Caco-2 (cell line): ENCODE measurements at regions of chr4 and their contacts with region 1.

Region 1: GRCh38 chr4:176642472-176642871 is 150.2 kb downstream of the VEGFC start:
- DNase-seq: no peak
- H3K4me3 ChIP-seq: no peak overlapping the region
- H3K4me3 Mint-ChIP-seq: no peak overlapping the region
- H3K27ac Mint-ChIP-seq: no peak overlapping the region
- H3K4me1 ChIP-seq: no peaks in the 10 kb centered on the region
- H3K4me1 Mint-ChIP-seq: no peaks in the 10 kb centered on the region
- H3K27me3 ChIP-seq: no peaks in the 10 kb centered on the region
- H3K27me3 Mint-ChIP-seq: no peaks in the 10 kb centered on the region
- CTCF ChIP-seq: no peak

Region 2: DNA sequence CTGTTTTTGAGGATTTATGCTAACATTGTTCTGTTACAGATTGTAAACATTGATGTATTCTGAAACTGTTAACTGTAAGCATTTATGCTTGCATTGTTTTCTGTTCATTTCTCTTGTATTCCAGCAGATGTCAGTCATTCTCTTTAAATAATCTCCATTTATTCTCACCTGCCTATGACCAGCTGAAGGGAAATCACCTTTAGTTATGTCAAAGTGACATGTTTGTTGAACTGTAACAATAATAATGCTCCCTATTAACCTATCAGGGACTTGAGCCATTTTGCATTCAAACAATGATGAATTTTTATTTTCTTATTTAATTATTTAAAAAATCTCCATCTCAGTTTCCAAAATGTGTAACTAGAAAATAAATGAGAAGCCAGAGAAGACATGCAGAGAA is 264.7 kb before region 1 on chr4:
- CTCF ChIA-PET with region 1: no interaction called
- POLR2A ChIA-PET with region 1: no interaction called
- intact Hi-C with region 1: loop called (anchors 5 kb)
- DNase-seq: no peak
- H3K4me3 ChIP-seq: no peak overlapping the region
- H3K4me3 Mint-ChIP-seq: no peak overlapping the region
- H3K27ac Mint-ChIP-seq: no peak overlapping the region
- H3K4me1 ChIP-seq: no peaks in the 10 kb centered on the region
- H3K4me1 Mint-ChIP-seq: no peaks in the 10 kb centered on the region
- H3K27me3 ChIP-seq: no peaks in the 10 kb centered on the region
- H3K27me3 Mint-ChIP-seq: peaks cover 6% of the 10 kb centered on the region
- CTCF ChIP-seq: peak in 1 of 2 experiments; percentile 34